CD4-positive, alpha-beta memory T cell (primary cell): ENCODE measurements at regions of chr10 and their contacts with region 1.

Region 1: GRCh38 chr10:114470956-114471905 is 66.9 kb upstream of the AFAP1L2 start:
- DNase-seq: peak; percentile 65 to 67 (median 66)
- H3K4me3 ChIP-seq: no peak overlapping the region
- H3K4me3 Mint-ChIP-seq: peak overlapping the region in 1 of 8 donors; percentile 18
- H3K27ac ChIP-seq: no peak overlapping the region
- H3K27ac Mint-ChIP-seq: peak overlapping the region; percentile 22 to 76 (median 47)
- H3K4me1 ChIP-seq: peaks cover 5% of the 10 kb centered on the region
- H3K4me1 Mint-ChIP-seq: peaks cover 13 to 24% (median 18%) of the 10 kb centered on the region in 4 donors
- H3K27me3 ChIP-seq: no peaks in the 10 kb centered on the region
- H3K27me3 Mint-ChIP-seq: no peaks in the 10 kb centered on the region

Region 2: DNA sequence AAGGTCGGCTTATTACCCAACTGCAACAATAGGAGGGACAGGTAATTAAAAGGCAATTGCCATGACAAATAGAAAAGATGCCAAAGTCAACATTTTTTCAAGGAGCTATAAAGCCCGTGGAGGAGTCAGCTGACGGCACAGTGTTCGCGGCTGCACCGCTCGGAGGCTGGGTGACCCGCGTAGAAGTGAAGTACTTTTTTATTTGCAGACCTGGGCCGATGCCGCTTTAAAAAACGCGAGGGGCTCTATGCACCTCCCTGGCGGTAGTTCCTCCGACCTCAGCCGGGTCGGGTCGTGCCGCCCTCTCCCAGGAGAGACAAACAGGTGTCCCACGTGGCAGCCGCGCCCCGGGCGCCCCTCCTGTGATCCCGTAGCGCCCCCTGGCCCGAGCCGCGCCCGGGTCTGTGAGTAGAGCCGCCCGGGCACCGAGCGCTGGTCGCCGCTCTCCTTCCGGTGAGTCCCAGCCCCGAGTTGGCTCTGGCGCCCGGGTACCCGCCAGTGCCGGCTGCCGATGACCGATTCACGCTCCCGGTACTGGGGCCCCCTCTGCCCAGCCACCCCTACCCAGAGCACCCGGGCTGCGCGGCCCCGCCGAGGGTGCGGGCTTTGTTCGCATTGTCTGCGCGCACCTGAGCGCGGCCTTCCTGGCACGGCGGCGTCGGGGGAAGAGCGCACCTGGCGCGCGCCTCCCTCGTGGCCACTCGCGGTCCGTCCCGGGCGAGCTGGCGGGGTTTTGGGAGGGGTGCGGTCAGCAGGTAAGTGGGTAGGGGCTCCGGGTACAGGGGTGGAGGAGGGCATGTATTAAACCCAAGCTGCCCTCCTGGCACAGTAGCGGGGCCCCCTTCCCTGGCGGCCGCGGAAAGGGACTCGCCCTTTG is 231.9 kb before region 1 on chr10 and contains the start of gene VWA2:
- CTCF ChIA-PET with region 1: no interaction called
- POLR2A ChIA-PET with region 1: no interaction called
- intact Hi-C with region 1: no loop called
- DNase-seq: peak in 2 of 5 donors; percentile 1 to 5
- H3K4me3 ChIP-seq: no peak within 1 kb of the TSS
- H3K4me3 Mint-ChIP-seq: peak within 1 kb of the TSS in 7 of 8 donors; percentile 25 to 69 (median 47)
- H3K27ac ChIP-seq: no peak within 1 kb of the TSS
- H3K27ac Mint-ChIP-seq: no peak within 1 kb of the TSS
- H3K4me1 ChIP-seq: no peaks in the 10 kb centered on the region
- H3K4me1 Mint-ChIP-seq: peaks cover 0 to 10% (median 7%) of the 10 kb centered on the region in 4 donors
- H3K27me3 ChIP-seq: peaks cover 27% of the 10 kb centered on the region
- H3K27me3 Mint-ChIP-seq: peaks cover 46 to 50% of the 10 kb centered on the region in 2 donors
- total RNA-seq, gene VWA2: not detected

Region 3: DNA sequence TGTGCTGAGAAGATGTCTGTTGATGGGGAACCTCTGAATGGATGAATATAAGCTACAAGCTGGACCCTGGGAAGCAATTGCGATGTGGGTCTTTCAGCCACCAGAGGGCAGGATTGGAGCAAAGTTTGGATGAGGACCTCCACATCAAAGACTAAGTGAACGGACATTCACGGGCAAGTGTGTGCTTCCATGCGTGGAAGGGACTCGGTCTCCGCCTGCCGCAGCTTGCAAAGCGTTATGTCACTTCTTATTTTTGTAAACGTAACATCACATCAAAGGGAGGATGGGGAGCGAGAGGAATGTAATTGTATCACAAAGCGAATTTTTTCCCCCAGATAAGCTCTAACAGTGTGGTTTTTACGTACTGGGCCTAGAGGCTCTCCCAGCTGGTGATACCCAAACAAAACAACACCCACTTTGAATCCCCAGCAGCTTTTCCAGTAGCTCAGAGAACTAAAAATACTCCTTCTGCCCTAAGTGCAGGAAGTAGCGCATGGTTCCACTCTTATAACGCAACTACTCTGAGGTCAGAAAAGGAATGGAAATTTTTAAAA is 167.1 kb before region 1 on chr10:
- CTCF ChIA-PET with region 1: interaction called, 22 read pairs
- POLR2A ChIA-PET with region 1: no interaction called
- intact Hi-C with region 1: loop called (anchors 1 kb)
- DNase-seq: peak; percentile 48 to 66 (median 55)
- H3K4me3 ChIP-seq: peak overlapping the region; percentile 53 to 83
- H3K4me3 Mint-ChIP-seq: peak overlapping the region; percentile 85 to 95 (median 89)
- H3K27ac ChIP-seq: peak overlapping the region; percentile 28
- H3K27ac Mint-ChIP-seq: peak overlapping the region in 6 of 7 donors; percentile 34 to 87 (median 58)
- H3K4me1 ChIP-seq: peaks cover 7% of the 10 kb centered on the region
- H3K4me1 Mint-ChIP-seq: peaks cover 5 to 13% (median 8%) of the 10 kb centered on the region in 4 donors
- H3K27me3 ChIP-seq: no peaks in the 10 kb centered on the region
- H3K27me3 Mint-ChIP-seq: no peaks in the 10 kb centered on the region

Region 4: DNA sequence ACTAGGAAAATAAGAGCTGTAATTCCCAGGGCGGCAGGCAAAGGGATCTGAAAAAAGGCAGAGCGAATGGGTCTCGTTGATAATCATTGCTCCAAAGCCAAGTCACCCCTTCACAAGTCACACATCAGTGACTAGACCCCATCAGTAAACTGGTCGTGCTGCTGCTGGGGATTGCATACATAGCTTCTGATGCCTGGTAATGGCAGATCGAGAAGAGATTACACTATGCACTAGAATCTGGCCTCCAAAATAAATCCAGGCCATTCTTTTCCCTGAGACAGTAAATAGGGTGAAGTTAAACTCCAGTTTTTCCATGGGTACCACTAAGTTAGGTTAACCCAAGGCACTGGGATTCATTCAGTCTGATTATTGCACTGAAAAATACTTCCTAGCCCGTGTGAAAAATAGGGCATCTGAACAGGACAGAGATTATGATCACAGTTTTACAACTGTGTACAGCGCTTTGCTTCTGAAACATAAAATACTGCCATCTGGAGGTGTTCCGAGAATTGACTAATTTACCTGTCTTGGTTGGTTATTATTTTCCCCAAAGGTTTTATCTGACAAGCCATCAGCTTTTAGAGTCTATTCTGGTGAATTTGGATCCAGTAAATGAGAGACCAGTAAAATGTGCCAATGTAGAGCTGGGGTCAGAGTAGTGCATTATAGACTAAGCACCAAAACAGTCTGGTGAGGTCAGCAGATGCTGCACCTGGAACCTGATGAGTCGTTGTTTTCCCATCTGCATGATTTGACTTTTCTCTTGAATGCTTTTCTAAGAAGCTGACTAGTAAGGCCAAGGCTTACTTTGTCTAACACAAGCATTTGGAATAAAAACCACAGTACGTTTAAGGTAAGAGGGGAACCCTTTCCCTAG is 15.9 kb after region 1 on chr10:
- CTCF ChIA-PET with region 1: interaction called, 17 read pairs
- POLR2A ChIA-PET with region 1: interaction called, 4 read pairs
- intact Hi-C with region 1: no loop called
- DNase-seq: no peak
- H3K4me3 ChIP-seq: no peak overlapping the region
- H3K4me3 Mint-ChIP-seq: no peak overlapping the region
- H3K27ac ChIP-seq: no peak overlapping the region
- H3K27ac Mint-ChIP-seq: peak overlapping the region in 4 of 7 donors; percentile 3 to 60 (median 36)
- H3K4me1 ChIP-seq: peaks cover 10% of the 10 kb centered on the region
- H3K4me1 Mint-ChIP-seq: peaks cover 11 to 33% (median 16%) of the 10 kb centered on the region in 4 donors
- H3K27me3 ChIP-seq: no peaks in the 10 kb centered on the region
- H3K27me3 Mint-ChIP-seq: no peaks in the 10 kb centered on the region

Region 5: DNA sequence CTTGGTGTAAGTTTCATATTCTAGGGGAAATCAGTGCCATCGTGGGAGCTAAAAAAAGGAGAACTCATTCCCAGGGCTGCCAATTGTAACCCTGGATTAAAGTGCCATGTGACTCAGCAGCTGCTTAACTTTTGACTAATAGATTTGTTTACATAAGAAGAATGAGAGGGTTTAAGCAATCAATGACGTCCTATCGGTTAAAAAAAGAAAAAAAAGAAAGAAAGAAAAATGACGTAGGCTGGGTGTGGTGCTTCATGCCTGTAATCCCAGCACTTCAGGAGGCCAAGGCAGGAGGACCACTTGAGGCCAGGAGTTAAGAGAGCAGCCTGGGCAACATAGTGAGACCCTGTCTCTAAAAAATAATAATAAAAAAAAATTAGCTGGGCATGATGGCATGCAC is 49.2 kb after region 1 on chr10:
- CTCF ChIA-PET with region 1: interaction called, 62 read pairs
- POLR2A ChIA-PET with region 1: interaction called, 18 read pairs
- intact Hi-C with region 1: no loop called
- DNase-seq: no peak
- H3K4me3 ChIP-seq: no peak overlapping the region
- H3K4me3 Mint-ChIP-seq: peak overlapping the region in 7 of 8 donors; percentile 6 to 78 (median 38)
- H3K27ac ChIP-seq: no peak overlapping the region
- H3K27ac Mint-ChIP-seq: peak overlapping the region in 6 of 7 donors; percentile 42 to 90 (median 77)
- H3K4me1 ChIP-seq: peaks cover 100% of the 10 kb centered on the region
- H3K4me1 Mint-ChIP-seq: peaks cover 74 to 100% (median 93%) of the 10 kb centered on the region in 4 donors
- H3K27me3 ChIP-seq: no peaks in the 10 kb centered on the region
- H3K27me3 Mint-ChIP-seq: no peaks in the 10 kb centered on the region

Region 6: DNA sequence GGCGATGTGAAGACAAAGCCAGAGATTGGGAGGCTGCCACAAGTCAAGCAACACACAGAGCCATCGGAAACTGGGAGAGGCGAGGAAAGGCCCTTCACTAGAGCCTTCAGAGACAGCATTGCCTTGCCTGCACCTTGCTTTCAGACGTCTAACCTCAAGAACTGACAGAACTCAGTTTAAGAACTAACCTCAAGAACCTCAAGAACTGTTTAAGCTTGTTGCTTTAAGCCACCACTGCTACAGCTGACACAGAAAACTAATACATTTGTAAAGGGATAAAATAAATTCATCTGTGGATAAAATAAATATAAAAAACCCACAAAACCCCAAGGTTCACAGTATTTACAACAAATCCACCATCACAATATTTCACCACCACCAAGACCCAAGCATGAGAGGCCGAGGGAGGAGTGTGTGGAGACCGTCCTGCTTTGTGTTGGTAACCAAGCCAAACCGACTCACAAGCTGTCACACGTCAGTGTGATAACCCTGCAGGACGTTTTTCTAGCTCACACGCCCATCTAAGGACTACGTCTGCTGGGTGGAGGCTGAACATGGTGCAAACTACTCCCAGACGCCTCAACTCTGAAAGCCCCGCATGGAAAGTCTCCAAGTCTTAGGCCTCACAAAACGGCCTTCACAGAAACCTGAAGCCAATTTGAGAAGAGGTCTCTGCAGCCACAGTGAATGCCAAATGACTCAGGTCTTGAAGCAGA is 70.0 kb after region 1 on chr10:
- CTCF ChIA-PET with region 1: interaction called, 241 read pairs
- POLR2A ChIA-PET with region 1: interaction called, 13 read pairs
- intact Hi-C with region 1: no loop called
- DNase-seq: peak; percentile 86 to 92 (median 90)
- H3K4me3 ChIP-seq: no peak overlapping the region
- H3K4me3 Mint-ChIP-seq: peak overlapping the region; percentile 57 to 87 (median 76)
- H3K27ac ChIP-seq: peak overlapping the region; percentile 74
- H3K27ac Mint-ChIP-seq: peak overlapping the region; percentile 89 to 100 (median 98)
- H3K4me1 ChIP-seq: peaks cover 97% of the 10 kb centered on the region
- H3K4me1 Mint-ChIP-seq: peaks cover 67 to 92% (median 86%) of the 10 kb centered on the region in 4 donors
- H3K27me3 ChIP-seq: no peaks in the 10 kb centered on the region
- H3K27me3 Mint-ChIP-seq: no peaks in the 10 kb centered on the region

Region 7: DNA sequence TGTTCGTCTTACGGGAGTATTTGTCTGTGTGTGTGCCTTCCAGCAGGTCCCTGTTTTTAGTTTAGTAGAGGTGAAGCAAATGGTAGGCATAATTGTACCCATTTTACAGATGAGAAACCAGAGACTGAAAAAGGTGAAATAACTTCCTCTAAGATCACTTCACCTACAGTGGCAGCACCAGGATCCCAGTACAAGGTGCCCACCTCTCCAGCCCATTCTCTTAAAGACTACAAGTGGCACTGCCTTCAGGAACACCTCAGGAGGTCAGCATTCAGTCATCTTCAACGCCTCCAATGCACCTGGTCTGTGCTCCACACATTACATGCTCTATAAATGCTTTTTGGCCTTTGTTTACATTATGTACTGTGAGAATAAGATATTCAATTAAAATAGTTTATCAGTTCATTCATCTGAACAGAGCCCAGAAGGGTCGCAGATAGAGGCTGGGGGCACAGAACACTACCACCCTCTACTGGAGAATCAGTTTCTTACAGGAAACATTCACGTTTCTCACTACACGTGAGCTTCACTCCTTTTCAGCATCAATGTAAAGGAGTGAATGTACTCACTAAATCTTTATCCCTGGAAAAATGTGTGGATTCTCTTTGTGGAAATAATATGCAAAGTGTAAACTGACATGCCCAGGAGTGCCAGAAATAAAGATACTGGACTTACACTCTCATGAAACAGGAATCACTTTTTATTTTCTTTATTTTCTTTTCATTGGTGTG is 232.3 kb after region 1 on chr10:
- CTCF ChIA-PET with region 1: interaction called, 33 read pairs
- POLR2A ChIA-PET with region 1: no interaction called
- intact Hi-C with region 1: loop called (anchors 1 kb)
- DNase-seq: peak in 4 of 5 donors; percentile 13 to 25 (median 16)
- H3K4me3 ChIP-seq: no peak overlapping the region
- H3K4me3 Mint-ChIP-seq: no peak overlapping the region
- H3K27ac ChIP-seq: no peak overlapping the region
- H3K27ac Mint-ChIP-seq: no peak overlapping the region
- H3K4me1 ChIP-seq: no peaks in the 10 kb centered on the region
- H3K4me1 Mint-ChIP-seq: no peaks in the 10 kb centered on the region
- H3K27me3 ChIP-seq: no peaks in the 10 kb centered on the region
- H3K27me3 Mint-ChIP-seq: peaks cover 1 to 5% of the 10 kb centered on the region in 2 donors